Transverse colon (tissue), 4 donors: ENCODE measurements at regions of chr16 and their contacts with region 1.

Region 1: DNA sequence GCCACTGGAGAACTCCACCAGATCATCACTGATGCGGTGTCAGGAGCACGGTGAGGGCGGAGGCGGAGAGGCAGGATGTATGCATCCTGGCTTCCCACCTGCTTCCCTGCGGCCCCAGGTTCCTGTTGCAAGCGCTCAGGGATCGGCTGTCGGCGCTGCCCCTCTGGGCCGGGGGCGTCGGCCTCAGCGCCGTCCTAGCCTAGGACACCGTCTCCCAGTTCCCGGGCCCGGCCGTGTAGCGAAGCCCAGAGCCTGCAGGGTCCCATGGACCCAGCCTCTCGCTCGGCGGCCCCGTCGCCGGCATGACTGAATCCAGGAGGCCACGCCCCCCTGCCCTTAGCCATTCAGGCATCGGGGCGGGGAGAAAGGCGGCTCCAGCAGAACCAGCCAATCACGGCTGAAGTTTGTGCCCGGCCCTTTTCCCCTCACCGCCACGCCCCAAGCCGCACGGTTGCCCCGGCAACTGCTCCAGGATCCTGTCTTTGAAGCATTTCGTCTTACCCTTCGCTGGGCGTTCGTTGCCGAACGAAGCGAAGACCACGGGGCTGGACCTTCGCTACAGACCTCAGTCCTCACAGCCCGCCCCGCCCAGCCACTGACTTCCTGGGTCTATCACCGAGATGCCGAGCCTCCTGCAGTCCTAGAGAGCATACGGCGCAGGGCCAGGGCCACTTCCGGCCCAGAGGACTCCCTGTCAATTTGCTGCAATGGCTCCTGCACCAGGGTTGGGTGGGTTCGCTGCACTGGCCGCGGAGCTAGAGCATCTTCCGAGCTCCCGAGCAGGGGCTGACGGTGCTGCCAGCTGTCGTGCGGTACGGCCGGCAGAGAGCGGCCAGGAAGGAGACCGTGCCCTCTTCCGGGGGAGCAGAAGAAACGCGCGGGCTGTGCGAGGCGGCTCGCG is 10.6 kb upstream of the ZNF213 start:
- DNase-seq: peak; percentile 97
- H3K4me3 ChIP-seq: peak overlapping the region; percentile 67 to 72 (median 69)
- H3K27ac ChIP-seq: peak overlapping the region; percentile 85 to 94 (median 89)
- H3K4me1 ChIP-seq: peaks cover 13 to 24% (median 19%) of the 10 kb centered on the region in 4 donors
- H3K27me3 ChIP-seq: no peaks in the 10 kb centered on the region
- CTCF ChIP-seq: peak in 3 of 5 experiments; percentile 10 to 45 (median 27)
- EP300 ChIP-seq: no peak
- POLR2A ChIP-seq: peak; percentile 69

Region 2: GRCh38 chr16:3065069-3065741 is 59.0 kb before region 1 on chr16 and contains the start of gene IL32:
- in situ Hi-C with region 1: loop called in 2 of 4 experiments (anchors 10 kb)
- intact Hi-C with region 1: no loop called
- DNase-seq: peak; percentile 89
- H3K4me3 ChIP-seq: peak within 1 kb of the TSS; percentile 15 to 50 (median 26)
- H3K27ac ChIP-seq: peak within 1 kb of the TSS; percentile 78 to 87 (median 81)
- H3K4me1 ChIP-seq: peaks cover 6 to 49% (median 29%) of the 10 kb centered on the region in 4 donors
- H3K27me3 ChIP-seq: no peaks in the 10 kb centered on the region
- CTCF ChIP-seq: no peak
- EP300 ChIP-seq: no peak
- POLR2A ChIP-seq: peak; percentile 77
- total RNA-seq, gene IL32: 21.9 to 720 (median 492) TPM

Region 3: DNA sequence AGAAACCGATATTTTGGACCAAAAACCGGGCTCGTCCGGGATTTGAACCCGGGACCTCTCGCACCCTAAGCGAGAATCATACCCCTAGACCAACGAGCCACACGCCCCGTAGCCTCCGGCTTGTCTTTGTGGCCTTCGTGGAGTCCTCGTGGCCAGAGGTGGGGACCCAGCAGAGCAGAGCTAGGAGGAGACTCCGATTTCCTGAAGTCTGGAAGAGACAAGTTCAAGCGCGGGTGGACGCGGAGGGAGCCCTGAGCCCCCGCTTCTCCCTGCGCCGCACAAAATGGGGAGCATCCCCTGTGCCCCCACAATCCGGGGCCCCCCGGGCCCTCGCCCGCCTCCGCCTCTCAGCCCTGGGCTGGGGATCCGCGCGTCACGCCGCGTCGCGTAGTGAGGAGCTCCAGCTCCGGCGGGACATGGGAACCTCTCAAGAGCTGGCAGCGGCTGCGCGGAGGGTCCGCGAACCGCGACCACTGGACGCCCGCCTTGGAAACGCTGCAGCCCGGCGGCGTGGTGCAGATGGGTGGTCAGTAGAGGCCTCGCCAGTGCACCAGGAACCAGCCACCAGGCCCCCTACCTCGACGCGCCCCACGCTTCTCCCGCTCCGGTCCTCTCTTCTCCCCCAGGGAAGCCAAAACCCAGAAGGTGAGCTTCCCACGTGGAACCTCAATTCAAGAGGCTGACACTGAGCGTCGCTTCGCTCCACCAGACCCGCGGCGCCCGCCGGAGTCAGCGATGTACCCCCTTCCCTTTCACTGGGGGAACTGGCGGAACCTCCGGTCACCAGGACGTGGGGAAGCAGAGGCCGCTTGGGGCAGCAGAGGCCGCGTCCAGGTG is 58.6 kb after region 1 on chr16:
- in situ Hi-C with region 1: no loop called
- intact Hi-C with region 1: no loop called
- DNase-seq: peak; percentile 35
- H3K4me3 ChIP-seq: peak overlapping the region in 2 of 4 donors; percentile 22 to 35
- H3K27ac ChIP-seq: no peak overlapping the region
- H3K4me1 ChIP-seq: peaks cover 0 to 15% (median 14%) of the 10 kb centered on the region in 4 donors
- H3K27me3 ChIP-seq: peaks cover 100% of the 10 kb centered on the region
- CTCF ChIP-seq: peak; percentile 17 to 35 (median 25)
- EP300 ChIP-seq: no peak
- POLR2A ChIP-seq: no peak

Region 4: DNA sequence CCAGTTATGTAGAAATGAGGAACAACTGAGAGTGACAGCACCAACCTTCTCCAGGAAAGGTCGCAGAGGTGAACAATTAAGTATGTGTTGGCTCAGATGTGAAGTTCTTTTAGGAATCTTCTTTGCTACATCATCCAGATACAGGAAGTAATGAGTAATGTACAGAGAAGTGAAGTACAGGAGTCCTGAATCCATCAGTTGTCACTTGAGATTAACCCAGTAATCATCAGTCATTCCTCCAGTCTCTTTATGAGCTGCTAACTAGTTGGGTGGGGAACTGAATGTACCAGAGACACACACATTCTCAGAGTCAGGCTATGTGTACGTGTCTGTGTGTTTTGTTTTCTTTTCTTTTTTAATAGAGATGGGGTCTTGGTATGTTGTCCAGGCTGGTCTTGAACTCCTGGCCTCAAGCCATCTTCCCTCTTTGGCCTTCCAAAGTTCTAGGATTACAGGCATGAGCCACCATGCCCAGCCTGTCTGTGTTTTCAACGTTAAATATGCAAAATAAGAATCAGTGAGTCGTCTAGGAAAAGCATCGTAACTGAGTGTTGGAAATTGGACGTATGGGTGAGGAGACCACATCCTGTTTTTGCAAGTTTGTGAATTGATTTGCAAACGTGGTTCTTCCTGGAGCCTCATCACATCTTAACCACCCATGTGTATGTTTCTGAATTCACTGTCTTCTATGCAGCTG is 90.8 kb after region 1 on chr16:
- in situ Hi-C with region 1: no loop called
- intact Hi-C with region 1: no loop called
- DNase-seq: no peak
- H3K4me3 ChIP-seq: no peak overlapping the region
- H3K27ac ChIP-seq: no peak overlapping the region
- H3K4me1 ChIP-seq: no peaks in the 10 kb centered on the region
- H3K27me3 ChIP-seq: peaks cover 5% of the 10 kb centered on the region
- CTCF ChIP-seq: no peak
- EP300 ChIP-seq: no peak
- POLR2A ChIP-seq: no peak